ENCODE measurements at regions of chrX and their contacts with region 1.

Region 1: GRCh38 chrX:49269010-49269767 is 404 bp upstream of the PPP1R3F start:
- DNase-seq: peak; percentile 97
- H3K4me3 Mint-ChIP-seq: peak overlapping the region; percentile 99
- H3K27ac Mint-ChIP-seq: peak overlapping the region; percentile 100
- H3K4me1 Mint-ChIP-seq: peaks cover 46% of the 10 kb centered on the region
- H3K27me3 Mint-ChIP-seq: no peaks in the 10 kb centered on the region

Region 2: DNA sequence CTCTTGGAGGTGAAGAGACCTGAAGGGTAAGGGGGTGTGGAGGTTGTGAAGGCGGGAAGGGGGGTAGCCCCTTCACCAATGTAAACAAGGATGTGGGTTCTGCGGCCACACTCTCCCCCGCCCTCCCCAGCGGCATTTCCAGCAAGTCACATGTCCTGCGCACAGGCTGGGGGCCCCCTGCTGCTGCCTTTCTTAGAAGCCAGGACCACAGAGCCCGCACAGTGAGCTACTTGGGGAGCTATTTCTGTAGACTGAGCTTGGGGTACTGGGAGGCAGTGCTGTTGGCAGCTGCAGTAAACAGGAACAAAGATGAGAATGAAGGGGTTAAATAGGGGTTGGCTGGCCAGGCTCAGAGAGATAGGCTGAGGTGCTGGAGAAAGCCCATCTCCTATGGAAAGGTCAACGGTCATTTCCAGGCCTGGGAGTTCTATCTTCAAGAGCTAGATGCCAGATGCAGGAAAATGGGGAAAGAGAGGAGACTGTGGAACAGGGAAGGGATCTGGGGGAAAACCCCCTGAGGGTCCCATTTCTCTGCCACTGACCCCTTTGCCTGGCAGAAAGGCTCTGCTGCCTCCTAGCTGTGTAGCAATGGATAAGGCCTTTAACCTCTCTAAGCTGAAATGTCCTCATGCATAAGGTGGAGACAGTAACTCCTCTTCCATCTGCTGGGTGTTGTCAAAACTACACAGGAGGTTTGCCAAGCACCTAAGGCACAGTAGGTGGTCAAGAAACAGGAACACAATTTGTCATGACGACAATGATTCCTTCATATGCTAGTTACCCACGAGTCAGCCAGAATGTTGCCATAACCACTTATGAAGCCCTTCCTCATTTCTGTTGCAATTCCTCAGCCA is 331.9 kb before region 1 on chrX:
- intact Hi-C with region 1: loop called (anchors 5 kb)
- DNase-seq: peak; percentile 96
- H3K4me3 Mint-ChIP-seq: peak overlapping the region; percentile 82
- H3K27ac Mint-ChIP-seq: peak overlapping the region; percentile 96
- H3K4me1 Mint-ChIP-seq: peaks cover 72% of the 10 kb centered on the region
- H3K27me3 Mint-ChIP-seq: no peaks in the 10 kb centered on the region

Region 3: GRCh38 chrX:49191033-49191871 is 77.9 kb before region 1 on chrX:
- intact Hi-C with region 1: loop called (anchors 5 kb)
- DNase-seq: peak; percentile 95
- H3K4me3 Mint-ChIP-seq: peak overlapping the region; percentile 93
- H3K27ac Mint-ChIP-seq: peak overlapping the region; percentile 93
- H3K4me1 Mint-ChIP-seq: peaks cover 27% of the 10 kb centered on the region
- H3K27me3 Mint-ChIP-seq: no peaks in the 10 kb centered on the region

Region 4: GRCh38 chrX:49199906-49200771 is 69.0 kb before region 1 on chrX and contains the start of gene SYP:
- intact Hi-C with region 1: loop called (anchors 1 kb)
- DNase-seq: peak; percentile 96
- H3K4me3 Mint-ChIP-seq: peak within 1 kb of the TSS; percentile 80
- H3K27ac Mint-ChIP-seq: peak within 1 kb of the TSS; percentile 69
- H3K4me1 Mint-ChIP-seq: peaks cover 17% of the 10 kb centered on the region
- H3K27me3 Mint-ChIP-seq: no peaks in the 10 kb centered on the region
- total RNA-seq, gene SYP: 4.9 and 5.3 TPM in 2 replicates

Region 5: DNA sequence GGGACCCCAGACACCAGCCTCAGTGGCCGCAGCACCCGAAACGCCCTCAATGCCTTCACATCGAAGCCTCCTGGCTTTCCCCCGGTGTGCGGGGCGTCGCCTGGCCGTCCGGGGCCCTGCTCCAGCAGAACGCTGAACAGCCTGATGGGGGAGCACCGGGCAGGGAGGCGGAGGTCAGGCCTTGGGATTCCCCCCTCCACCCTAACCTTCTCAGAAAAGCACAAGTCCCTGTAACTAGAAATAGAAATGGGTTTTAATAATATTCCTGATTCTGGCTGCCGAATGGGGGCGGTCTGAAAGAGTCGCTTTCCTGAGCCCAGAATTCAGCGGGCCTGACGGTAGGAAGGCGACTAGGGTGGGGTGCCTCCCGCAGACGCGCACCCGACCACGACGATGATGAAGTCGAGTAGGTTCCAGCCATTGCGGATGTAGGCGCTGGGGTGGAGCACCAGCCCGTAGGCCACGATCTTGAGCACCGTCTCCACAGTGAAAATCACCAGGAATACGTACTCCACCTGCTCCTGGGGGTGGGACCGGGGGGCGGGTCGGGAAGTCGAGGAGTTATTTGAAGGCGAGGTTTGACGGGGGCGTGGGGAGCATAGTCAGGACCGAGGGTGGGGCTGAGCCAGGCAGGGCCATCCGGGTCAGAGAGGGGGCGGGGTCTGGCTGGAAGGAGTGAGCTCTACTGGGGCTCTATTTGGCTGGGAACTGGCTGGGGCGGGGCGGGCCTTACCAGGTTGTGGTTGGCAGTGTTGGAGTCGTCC is 38.5 kb before region 1 on chrX:
- intact Hi-C with region 1: loop called (anchors 1 kb)
- DNase-seq: peak; percentile 88
- H3K4me3 Mint-ChIP-seq: peak overlapping the region; percentile 80
- H3K27ac Mint-ChIP-seq: peak overlapping the region; percentile 89
- H3K4me1 Mint-ChIP-seq: peaks cover 15% of the 10 kb centered on the region
- H3K27me3 Mint-ChIP-seq: peaks cover 1% of the 10 kb centered on the region

Region 6: GRCh38 chrX:49282647-49283011 is 13.4 kb after region 1 on chrX:
- intact Hi-C with region 1: no loop called
- DNase-seq: no peak
- H3K4me3 Mint-ChIP-seq: no peak overlapping the region
- H3K27ac Mint-ChIP-seq: peak overlapping the region; percentile 51
- H3K4me1 Mint-ChIP-seq: peaks cover 32% of the 10 kb centered on the region
- H3K27me3 Mint-ChIP-seq: no peaks in the 10 kb centered on the region

Region 7: DNA sequence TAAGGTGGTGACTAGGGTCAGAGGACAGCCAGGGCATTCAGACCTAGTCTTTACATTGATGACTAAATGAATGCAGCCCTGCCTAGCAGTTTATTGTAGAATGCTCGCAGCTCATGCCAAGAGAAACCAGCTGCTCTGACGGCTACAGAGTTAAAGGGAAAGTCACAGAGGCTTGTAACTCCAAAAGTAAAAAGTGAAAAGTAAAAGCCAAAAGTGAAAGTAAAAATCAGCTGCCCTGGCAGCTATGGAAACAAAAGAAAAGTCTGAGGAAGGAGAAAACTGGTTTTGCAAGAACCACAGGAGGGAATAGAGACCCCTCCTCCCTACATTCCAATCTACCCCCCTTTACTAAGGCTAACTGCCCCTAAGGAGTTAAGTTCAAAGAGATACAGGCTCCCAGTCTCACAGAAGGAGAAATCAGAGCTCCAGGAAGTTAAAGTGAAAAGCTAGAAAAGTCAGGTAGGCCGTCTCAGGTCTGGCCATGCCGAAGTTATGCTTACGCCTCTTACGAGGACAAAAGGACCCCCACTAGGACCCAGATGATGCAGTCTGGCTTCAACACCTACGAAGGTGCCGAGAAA is 40.3 kb after region 1 on chrX:
- intact Hi-C with region 1: loop called (anchors 5 kb)
- DNase-seq: peak; percentile 64
- H3K4me3 Mint-ChIP-seq: peak overlapping the region; percentile 85
- H3K27ac Mint-ChIP-seq: peak overlapping the region; percentile 74
- H3K4me1 Mint-ChIP-seq: peaks cover 16% of the 10 kb centered on the region
- H3K27me3 Mint-ChIP-seq: peaks cover 5% of the 10 kb centered on the region